ENCODE measurements at regions of chr4 and their contacts with region 1.

Region 1: DNA sequence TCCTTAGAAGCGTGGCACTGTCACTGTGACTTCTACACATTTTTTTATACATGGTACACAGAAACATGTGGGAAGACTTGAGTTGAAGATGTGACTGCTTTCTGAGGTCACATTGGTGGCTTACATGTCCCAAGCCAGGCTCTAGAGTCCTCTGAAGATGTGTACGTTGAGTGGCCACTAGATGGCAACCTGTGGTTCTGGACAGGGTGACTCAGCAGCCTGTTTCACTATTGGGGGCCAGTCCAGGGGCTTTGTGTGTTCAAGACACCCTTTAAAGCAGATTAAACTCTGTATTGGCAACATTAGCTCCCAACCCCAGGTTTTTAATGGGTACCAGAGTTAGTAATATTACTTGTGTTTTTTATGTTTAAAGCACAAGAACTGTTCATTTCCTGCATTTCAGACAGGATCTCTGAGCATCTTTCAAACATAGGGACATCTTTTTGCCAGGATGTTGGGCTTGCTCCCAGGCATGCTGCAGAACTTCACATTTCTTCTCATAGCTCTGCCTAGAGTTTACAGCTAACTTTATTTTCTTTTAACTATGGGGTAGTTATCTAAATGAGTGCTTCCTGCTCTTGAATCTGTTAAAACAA is 53.0 kb downstream of the DCUN1D4 start:
- DNase-seq: peak; percentile 28 to 67 (median 41)
- H3K4me3 ChIP-seq: no peak overlapping the region
- H3K27ac ChIP-seq: peak overlapping the region in 1 of 2 donors; percentile 2
- H3K4me1 ChIP-seq: peaks cover 3% of the 10 kb centered on the region
- H3K27me3 ChIP-seq: no peaks in the 10 kb centered on the region
- CTCF ChIP-seq: peak; percentile 26 to 47 (median 44)
- EP300 ChIP-seq: no peak
- POLR2A ChIP-seq: no peak

Region 2: GRCh38 chr4:51842554-51843308 is 53.2 kb before region 1 on chr4 and contains the start of gene DCUN1D4:
- intact Hi-C with region 1: loop called in 1 of 4 experiments (anchors 10 kb)
- DNase-seq: peak; percentile 100
- H3K4me3 ChIP-seq: peak within 1 kb of the TSS; percentile 91
- H3K27ac ChIP-seq: peak within 1 kb of the TSS; percentile 87 to 96
- H3K4me1 ChIP-seq: peaks cover 4% of the 10 kb centered on the region
- H3K27me3 ChIP-seq: no peaks in the 10 kb centered on the region
- CTCF ChIP-seq: peak; percentile 34 to 76 (median 49)
- EP300 ChIP-seq: no peak
- POLR2A ChIP-seq: peak; percentile 83
- total RNA-seq, gene DCUN1D4: 54.0 to 102 (median 73.4) TPM

Region 3: GRCh38 chr4:51870441-51871188 is 25.3 kb before region 1 on chr4:
- intact Hi-C with region 1: no loop called
- DNase-seq: no peak
- H3K4me3 ChIP-seq: no peak overlapping the region
- H3K27ac ChIP-seq: no peak overlapping the region
- H3K4me1 ChIP-seq: no peaks in the 10 kb centered on the region
- H3K27me3 ChIP-seq: no peaks in the 10 kb centered on the region
- CTCF ChIP-seq: no peak
- EP300 ChIP-seq: no peak
- POLR2A ChIP-seq: no peak

Region 4: DNA sequence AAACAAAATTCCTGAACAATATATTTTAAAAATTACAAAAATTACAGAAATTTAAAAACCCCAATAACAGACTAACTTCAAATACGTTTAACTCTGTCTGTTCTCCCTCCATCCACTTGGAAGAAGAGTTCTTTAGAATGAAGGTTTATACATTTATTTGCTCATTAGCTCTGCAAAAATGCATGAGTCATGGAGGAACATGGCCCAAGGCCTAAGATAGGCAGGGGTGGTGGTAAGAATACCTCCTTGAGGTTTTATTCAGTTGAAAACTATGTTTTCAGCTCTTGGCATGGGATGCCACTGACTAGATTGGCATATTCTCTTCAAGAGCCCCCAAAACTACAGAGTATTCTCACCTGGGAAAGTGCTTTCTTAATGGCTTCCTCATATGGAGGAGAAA is 133.1 kb after region 1 on chr4:
- intact Hi-C with region 1: loop called in 2 of 4 experiments (anchors 10 kb)
- DNase-seq: no peak
- H3K4me3 ChIP-seq: no peak overlapping the region
- H3K27ac ChIP-seq: no peak overlapping the region
- H3K4me1 ChIP-seq: no peaks in the 10 kb centered on the region
- H3K27me3 ChIP-seq: no peaks in the 10 kb centered on the region
- CTCF ChIP-seq: no peak
- EP300 ChIP-seq: no peak
- POLR2A ChIP-seq: no peak

Region 5: GRCh38 chr4:52038103-52038912 is 142.4 kb after region 1 on chr4 and contains the start of gene SGCB:
- intact Hi-C with region 1: loop called in 1 of 4 experiments (anchors 10 kb)
- DNase-seq: peak; percentile 65 to 80 (median 73)
- H3K4me3 ChIP-seq: peak within 1 kb of the TSS; percentile 76
- H3K27ac ChIP-seq: peak within 1 kb of the TSS; percentile 76 to 77
- H3K4me1 ChIP-seq: peaks cover 9% of the 10 kb centered on the region
- H3K27me3 ChIP-seq: no peaks in the 10 kb centered on the region
- CTCF ChIP-seq: no peak
- EP300 ChIP-seq: no peak
- POLR2A ChIP-seq: no peak
- total RNA-seq, gene SGCB: 21.3 to 47.5 (median 32.7) TPM

Region 6: DNA sequence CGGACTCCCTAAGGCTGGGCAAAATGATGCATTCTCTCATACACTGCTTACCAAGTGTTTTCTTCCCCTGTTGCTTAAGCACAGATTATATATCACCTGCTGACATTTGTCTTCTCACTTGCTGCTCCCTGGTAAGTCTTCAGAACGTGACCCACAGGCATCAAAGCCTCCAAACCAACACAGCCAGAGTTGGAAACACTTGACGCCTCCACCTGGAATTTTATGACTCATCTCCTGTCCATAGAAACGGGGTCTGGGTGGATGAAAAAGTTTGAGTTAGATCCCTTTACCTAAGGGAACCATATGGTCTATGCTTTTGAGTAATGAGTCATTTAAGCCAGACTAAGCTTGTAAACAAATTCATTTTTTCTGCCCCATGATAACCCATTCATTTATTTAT is 511.6 kb after region 1 on chr4:
- intact Hi-C with region 1: no loop called
- DNase-seq: no peak
- H3K4me3 ChIP-seq: no peak overlapping the region
- H3K27ac ChIP-seq: no peak overlapping the region
- H3K4me1 ChIP-seq: no peaks in the 10 kb centered on the region
- H3K27me3 ChIP-seq: no peaks in the 10 kb centered on the region
- CTCF ChIP-seq: no peak
- EP300 ChIP-seq: no peak
- POLR2A ChIP-seq: no peak

Measured in ovary (tissue), 10 donors.